CD8-positive, alpha-beta T cell (primary cell): ENCODE measurements at regions of chr12 and their contacts with region 1.

Region 1: DNA sequence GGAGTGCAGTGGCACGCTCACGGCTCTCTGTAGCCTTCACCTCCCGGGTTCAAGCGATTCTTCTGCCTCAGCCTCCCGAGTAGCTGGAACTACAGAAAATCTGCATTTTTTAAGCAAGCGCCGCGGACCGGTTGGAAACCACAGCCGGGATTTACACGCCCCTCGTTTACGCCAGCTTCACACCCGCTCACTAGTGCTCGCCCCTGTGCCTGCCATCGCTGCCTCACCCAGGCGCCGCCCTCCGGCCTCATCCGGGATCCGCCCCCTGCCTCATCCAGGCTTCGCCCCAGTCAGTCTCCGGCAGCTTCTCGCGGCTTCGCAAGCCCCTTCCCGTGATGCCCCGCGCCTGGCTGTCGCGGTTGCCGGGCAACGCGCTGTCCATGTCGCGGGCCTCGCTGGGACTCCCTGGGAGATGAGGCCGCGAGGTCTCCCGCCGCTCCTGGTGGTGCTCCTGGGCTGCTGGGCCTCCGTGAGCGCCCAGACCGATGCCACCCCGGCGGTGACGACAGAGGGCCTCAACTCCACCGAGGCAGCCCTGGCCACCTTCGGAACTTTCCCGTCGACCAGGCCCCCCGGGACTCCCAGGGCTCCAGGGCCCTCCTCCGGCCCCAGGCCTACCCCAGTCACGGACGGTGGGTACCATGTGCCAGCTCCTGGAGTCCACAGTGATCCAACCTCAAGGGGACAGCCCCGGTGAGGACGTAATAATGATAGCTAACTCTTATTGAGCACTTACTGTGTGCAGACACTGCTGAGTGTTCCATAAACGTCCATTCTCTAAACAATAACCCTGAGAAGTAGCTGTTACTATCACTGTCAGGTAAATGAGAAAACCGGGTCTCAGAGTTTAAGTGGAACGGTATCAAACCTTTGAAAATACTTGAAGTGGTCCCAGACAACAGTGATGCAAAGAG is at the start of gene TCTN1:
- DNase-seq: peak; percentile 90 to 97 (median 95)
- ATAC-seq: peak; percentile 100
- H3K4me3 ChIP-seq: peak within 1 kb of the TSS; percentile 75 to 76
- H3K4me3 Mint-ChIP-seq: peak within 1 kb of the TSS; percentile 88
- H3K27ac ChIP-seq: peak within 1 kb of the TSS; percentile 78 to 83
- H3K27ac Mint-ChIP-seq: peak within 1 kb of the TSS; percentile 85
- H3K4me1 ChIP-seq: peaks cover 5% of the 10 kb centered on the region
- H3K4me1 Mint-ChIP-seq: peaks cover 7% of the 10 kb centered on the region
- H3K27me3 ChIP-seq: no peaks in the 10 kb centered on the region
- H3K27me3 Mint-ChIP-seq: no peaks in the 10 kb centered on the region
- CTCF ChIP-seq: no peak
- total RNA-seq, gene TCTN1: 4.7 to 4.9 TPM

Region 2: GRCh38 chr12:110124184-110124995 is 489.6 kb before region 1 on chr12 and contains the start of gene IFT81:
- CTCF ChIA-PET with region 1: no interaction called
- POLR2A ChIA-PET with region 1: no interaction called
- intact Hi-C with region 1: loop called (anchors 10 kb)
- DNase-seq: peak; percentile 94 to 99 (median 96)
- ATAC-seq: peak; percentile 95
- H3K4me3 ChIP-seq: peak within 1 kb of the TSS; percentile 69 to 96
- H3K4me3 Mint-ChIP-seq: peak within 1 kb of the TSS; percentile 91
- H3K27ac ChIP-seq: peak within 1 kb of the TSS; percentile 60 to 73
- H3K27ac Mint-ChIP-seq: peak within 1 kb of the TSS; percentile 83
- H3K4me1 ChIP-seq: peaks cover 10% of the 10 kb centered on the region
- H3K4me1 Mint-ChIP-seq: peaks cover 8% of the 10 kb centered on the region
- H3K27me3 ChIP-seq: no peaks in the 10 kb centered on the region
- H3K27me3 Mint-ChIP-seq: peaks cover 3% of the 10 kb centered on the region
- CTCF ChIP-seq: no peak
- total RNA-seq, gene IFT81: 0.25 to 0.43 TPM

Region 3: GRCh38 chr12:110468212-110469048 is 145.6 kb before region 1 on chr12 and contains the starts of genes FAM216A and GPN3:
- CTCF ChIA-PET with region 1: interaction called, 3 read pairs
- POLR2A ChIA-PET with region 1: interaction called, 6 read pairs
- intact Hi-C with region 1: loop called in 1 of 2 experiments (anchors 1 kb)
- DNase-seq: peak; percentile 89 to 98 (median 95)
- ATAC-seq: peak; percentile 89
- H3K4me3 ChIP-seq: peak within 1 kb of the TSS; percentile 90 to 96
- H3K4me3 Mint-ChIP-seq: peak within 1 kb of the TSS; percentile 99
- H3K27ac ChIP-seq: peak within 1 kb of the TSS; percentile 74 to 87
- H3K27ac Mint-ChIP-seq: peak within 1 kb of the TSS; percentile 95
- H3K4me1 ChIP-seq: peaks cover 23% of the 10 kb centered on the region
- H3K4me1 Mint-ChIP-seq: peaks cover 43% of the 10 kb centered on the region
- H3K27me3 ChIP-seq: no peaks in the 10 kb centered on the region
- H3K27me3 Mint-ChIP-seq: no peaks in the 10 kb centered on the region
- CTCF ChIP-seq: no peak
- total RNA-seq, gene FAM216A: 3.5 to 4.5 TPM
- total RNA-seq, gene GPN3: 5.9 to 6.2 TPM

Region 4: DNA sequence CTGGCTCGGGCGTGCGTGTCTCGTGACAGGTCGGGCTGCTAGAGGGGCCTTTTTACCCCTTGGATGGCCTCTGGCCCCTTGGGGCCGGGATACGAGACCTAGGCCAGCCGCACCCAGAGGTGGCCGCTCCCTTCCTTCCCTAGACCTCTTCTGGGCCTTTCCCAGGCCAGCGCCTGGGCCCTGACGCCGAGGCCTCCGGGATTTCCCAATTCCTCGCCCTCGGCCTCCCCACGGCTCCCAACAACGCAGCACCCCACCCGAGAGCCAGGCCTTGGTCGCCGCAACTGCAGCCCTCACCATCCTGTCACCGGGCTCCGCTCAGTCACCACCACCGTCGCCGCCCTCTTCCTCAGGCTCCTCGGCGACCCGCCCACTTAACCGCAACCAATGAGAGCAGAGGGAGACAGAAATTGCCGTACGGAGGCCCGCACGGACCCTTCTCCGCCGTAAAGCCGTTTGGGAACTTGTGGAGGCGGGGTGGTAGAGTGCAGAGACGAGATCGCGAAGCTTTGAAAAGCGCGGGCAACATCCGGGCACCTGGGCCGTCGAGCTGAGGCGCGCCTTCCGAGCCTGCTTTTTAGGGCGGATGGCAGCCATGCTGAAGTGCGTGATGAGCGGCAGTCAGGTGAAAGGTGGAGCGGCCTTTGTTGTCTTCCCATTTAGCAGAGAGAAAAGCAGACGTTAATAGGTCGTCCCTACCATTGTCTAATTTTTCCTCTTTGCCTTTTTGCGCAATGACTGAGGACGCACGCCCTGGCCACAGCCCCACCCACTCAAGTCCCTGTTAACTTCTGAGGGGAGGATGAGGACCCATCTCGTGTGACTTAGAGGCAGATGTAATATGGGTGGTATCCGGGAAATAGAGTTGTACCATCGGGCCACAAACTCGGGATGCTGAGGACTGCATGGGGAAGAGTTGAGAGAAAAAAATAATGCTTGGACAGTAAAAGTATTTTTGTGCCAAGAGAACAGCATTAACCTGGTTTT is 112.0 kb before region 1 on chr12 and contains the starts of genes RAD9B and VPS29:
- CTCF ChIA-PET with region 1: interaction called, 4 read pairs
- POLR2A ChIA-PET with region 1: interaction called, 5 read pairs
- intact Hi-C with region 1: loop called in 1 of 2 experiments (anchors 1 kb)
- DNase-seq: peak; percentile 98 to 100 (median 99)
- ATAC-seq: peak; percentile 92
- H3K4me3 ChIP-seq: peak within 1 kb of the TSS; percentile 73 to 79
- H3K4me3 Mint-ChIP-seq: peak within 1 kb of the TSS; percentile 97
- H3K27ac ChIP-seq: peak within 1 kb of the TSS; percentile 74 to 89
- H3K27ac Mint-ChIP-seq: peak within 1 kb of the TSS; percentile 97
- H3K4me1 ChIP-seq: peaks cover 17% of the 10 kb centered on the region
- H3K4me1 Mint-ChIP-seq: peaks cover 38% of the 10 kb centered on the region
- H3K27me3 ChIP-seq: no peaks in the 10 kb centered on the region
- H3K27me3 Mint-ChIP-seq: no peaks in the 10 kb centered on the region
- CTCF ChIP-seq: no peak
- total RNA-seq, gene RAD9B: 0.57 to 1.5 TPM
- total RNA-seq, gene VPS29: 49.6 to 53.5 TPM

Region 5: DNA sequence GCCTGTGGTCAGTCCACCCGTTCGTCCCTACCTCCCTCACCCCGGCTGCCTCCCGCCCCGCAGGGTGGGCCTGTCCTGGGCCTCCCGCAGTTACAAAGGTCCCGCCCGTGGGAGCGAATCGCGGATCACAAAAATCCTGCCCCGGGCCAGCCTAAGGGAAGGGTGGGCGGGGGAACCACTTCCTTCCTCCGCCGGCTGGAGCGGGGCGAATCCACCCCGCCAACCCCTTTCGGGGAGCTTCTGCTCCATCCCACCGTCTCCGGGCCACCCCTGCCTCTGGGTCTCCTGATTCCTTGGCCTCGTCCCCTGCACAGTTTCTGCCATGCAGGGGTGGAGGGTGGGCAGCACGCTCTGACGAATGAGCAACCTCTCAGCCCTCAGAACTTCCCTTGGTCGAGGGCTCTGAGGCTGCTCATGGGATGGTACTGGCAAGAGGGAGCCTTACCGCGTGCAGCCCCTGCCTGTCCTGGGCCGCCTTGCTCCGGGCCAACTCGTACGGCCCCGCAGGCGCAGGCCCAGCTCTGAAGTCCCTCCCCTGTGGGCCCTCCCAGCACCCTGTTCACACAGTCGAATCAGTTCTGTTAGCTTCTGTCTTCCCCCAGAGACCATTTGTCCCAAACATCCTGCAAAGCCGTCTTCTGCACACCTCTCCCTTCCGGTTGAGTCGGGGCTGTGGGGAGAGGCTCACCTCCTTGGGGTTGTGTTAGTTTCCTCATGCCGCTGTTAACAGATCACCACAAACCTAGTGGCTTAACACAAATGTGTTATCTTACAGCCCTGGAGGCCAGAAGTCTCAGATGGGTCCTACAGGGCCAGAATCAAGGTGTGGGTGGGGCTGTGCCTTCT is 75.5 kb after region 1 on chr12:
- CTCF ChIA-PET with region 1: interaction called, 3 read pairs
- POLR2A ChIA-PET with region 1: interaction called, 7 read pairs
- intact Hi-C with region 1: loop called in 1 of 2 experiments (anchors 2 kb)
- DNase-seq: peak in 8 of 9 experiments; percentile 44 to 80 (median 61)
- ATAC-seq: peak; percentile 69
- H3K4me3 ChIP-seq: peak overlapping the region; percentile 74 to 81
- H3K4me3 Mint-ChIP-seq: peak overlapping the region; percentile 83
- H3K27ac ChIP-seq: peak overlapping the region; percentile 49 to 70
- H3K27ac Mint-ChIP-seq: peak overlapping the region; percentile 85
- H3K4me1 ChIP-seq: peaks cover 21% of the 10 kb centered on the region
- H3K4me1 Mint-ChIP-seq: peaks cover 35% of the 10 kb centered on the region
- H3K27me3 ChIP-seq: no peaks in the 10 kb centered on the region
- H3K27me3 Mint-ChIP-seq: no peaks in the 10 kb centered on the region
- CTCF ChIP-seq: no peak